ENCODE measurements at regions of chr2 and their contacts with region 1.

Region 1: DNA sequence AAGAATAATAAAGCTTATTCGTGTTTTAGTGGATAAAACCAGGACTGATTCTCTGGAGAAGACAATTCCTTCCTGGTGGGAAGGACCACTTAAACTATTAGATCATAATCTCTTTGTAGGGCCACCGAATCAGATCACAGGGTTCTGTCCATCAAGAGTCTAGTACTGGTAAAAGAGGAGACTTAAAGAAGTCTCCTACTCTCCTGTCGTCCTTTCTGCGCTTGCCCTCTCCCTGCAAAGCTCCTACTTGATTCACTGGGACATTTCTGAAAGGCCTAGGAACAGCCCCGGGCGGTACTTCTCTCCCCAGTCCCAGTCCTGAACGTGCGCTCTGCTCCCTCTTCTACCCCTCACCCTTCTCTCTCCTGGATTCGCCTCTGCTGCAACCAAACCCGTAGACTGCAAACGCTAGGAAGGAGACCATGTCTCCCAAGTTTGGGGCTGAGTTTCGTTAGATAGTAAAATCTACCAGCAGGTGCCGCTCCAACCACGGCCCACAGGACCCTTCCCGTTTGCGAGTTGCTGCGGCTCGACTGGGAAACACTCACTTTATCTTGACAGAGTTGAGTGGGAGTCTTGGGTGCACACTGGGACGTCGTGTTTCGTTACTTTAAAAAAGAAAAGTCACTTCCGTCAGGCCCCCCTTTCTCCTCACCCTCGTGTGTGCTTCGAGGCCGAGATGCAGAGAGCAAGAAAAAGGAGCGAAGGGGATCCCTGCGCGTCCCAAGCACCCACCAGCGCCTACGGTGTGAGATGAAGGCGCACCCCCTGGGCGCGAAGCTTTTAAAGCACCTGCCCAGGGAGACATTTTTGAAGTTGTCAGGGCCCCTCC is 923 bp downstream of the FIGLA start:
- DNase-seq: peak; percentile 55
- H3K4me3 Mint-ChIP-seq: peak overlapping the region; percentile 75
- H3K27ac Mint-ChIP-seq: no peak overlapping the region
- H3K4me1 Mint-ChIP-seq: peaks cover 13% of the 10 kb centered on the region
- H3K27me3 Mint-ChIP-seq: peaks cover 46% of the 10 kb centered on the region

Region 2: GRCh38 chr2:70656421-70657010 is 133.0 kb before region 1 on chr2:
- intact Hi-C with region 1: loop called (anchors 1 kb)
- DNase-seq: no peak
- H3K4me3 Mint-ChIP-seq: no peak overlapping the region
- H3K27ac Mint-ChIP-seq: no peak overlapping the region
- H3K4me1 Mint-ChIP-seq: peaks cover 27% of the 10 kb centered on the region
- H3K27me3 Mint-ChIP-seq: peaks cover 7% of the 10 kb centered on the region

Region 3: GRCh38 chr2:70851704-70852103 is 62.2 kb after region 1 on chr2:
- intact Hi-C with region 1: no loop called
- DNase-seq: peak; percentile 32
- H3K4me3 Mint-ChIP-seq: peak overlapping the region; percentile 23
- H3K27ac Mint-ChIP-seq: peak overlapping the region; percentile 32
- H3K4me1 Mint-ChIP-seq: peaks cover 26% of the 10 kb centered on the region
- H3K27me3 Mint-ChIP-seq: peaks cover 1% of the 10 kb centered on the region

Region 4: GRCh38 chr2:70861777-70862625 is 72.5 kb after region 1 on chr2:
- intact Hi-C with region 1: loop called (anchors 1 kb)
- DNase-seq: peak; percentile 67
- H3K4me3 Mint-ChIP-seq: peak overlapping the region; percentile 8
- H3K27ac Mint-ChIP-seq: no peak overlapping the region
- H3K4me1 Mint-ChIP-seq: peaks cover 6% of the 10 kb centered on the region
- H3K27me3 Mint-ChIP-seq: peaks cover 14% of the 10 kb centered on the region

Region 5: GRCh38 chr2:70871398-70872211 is 82.1 kb after region 1 on chr2:
- intact Hi-C with region 1: loop called (anchors 1 kb)
- DNase-seq: peak; percentile 72
- H3K4me3 Mint-ChIP-seq: peak overlapping the region; percentile 15
- H3K27ac Mint-ChIP-seq: no peak overlapping the region
- H3K4me1 Mint-ChIP-seq: peaks cover 7% of the 10 kb centered on the region
- H3K27me3 Mint-ChIP-seq: peaks cover 10% of the 10 kb centered on the region

Region 6: GRCh38 chr2:70919672-70920366 is 130.3 kb after region 1 on chr2:
- intact Hi-C with region 1: loop called (anchors 1 kb)
- DNase-seq: peak; percentile 65
- H3K4me3 Mint-ChIP-seq: no peak overlapping the region
- H3K27ac Mint-ChIP-seq: no peak overlapping the region
- H3K4me1 Mint-ChIP-seq: no peaks in the 10 kb centered on the region
- H3K27me3 Mint-ChIP-seq: peaks cover 19% of the 10 kb centered on the region

Region 7: GRCh38 chr2:70948337-70949003 is 158.9 kb after region 1 on chr2:
- intact Hi-C with region 1: loop called (anchors 1 kb)
- DNase-seq: peak; percentile 67
- H3K4me3 Mint-ChIP-seq: peak overlapping the region; percentile 81
- H3K27ac Mint-ChIP-seq: no peak overlapping the region
- H3K4me1 Mint-ChIP-seq: peaks cover 16% of the 10 kb centered on the region
- H3K27me3 Mint-ChIP-seq: peaks cover 32% of the 10 kb centered on the region

Measured in activated T-helper 1 cell treated with anti-CD3 and anti-CD28 coated beads, Interleukin-12 subunit alpha, Interleukin-12 subunit beta, Interleukin-2, Interleukin-4 antibody, amounts not matched to agents 30 ng/mL and 10 ng/mL and 1 ng/mL, durations not matched to agents 14 hours and 24 hours and 36 hours (primary cell).